ENCODE measurements at regions of chr3 and their contacts with region 1.

Region 1: GRCh38 chr3:40317061-40317855 is 7.8 kb downstream of the EIF1B start:
- DNase-seq: peak in 1 of 5 donors; percentile 56
- H3K4me3 ChIP-seq: no peak overlapping the region
- H3K27ac ChIP-seq: no peak overlapping the region
- H3K4me1 ChIP-seq: no peaks in the 10 kb centered on the region
- H3K27me3 ChIP-seq: no peaks in the 10 kb centered on the region
- CTCF ChIP-seq: peak; percentile 69 to 78 (median 71)
- EP300 ChIP-seq: no peak
- POLR2A ChIP-seq: no peak

Region 2: DNA sequence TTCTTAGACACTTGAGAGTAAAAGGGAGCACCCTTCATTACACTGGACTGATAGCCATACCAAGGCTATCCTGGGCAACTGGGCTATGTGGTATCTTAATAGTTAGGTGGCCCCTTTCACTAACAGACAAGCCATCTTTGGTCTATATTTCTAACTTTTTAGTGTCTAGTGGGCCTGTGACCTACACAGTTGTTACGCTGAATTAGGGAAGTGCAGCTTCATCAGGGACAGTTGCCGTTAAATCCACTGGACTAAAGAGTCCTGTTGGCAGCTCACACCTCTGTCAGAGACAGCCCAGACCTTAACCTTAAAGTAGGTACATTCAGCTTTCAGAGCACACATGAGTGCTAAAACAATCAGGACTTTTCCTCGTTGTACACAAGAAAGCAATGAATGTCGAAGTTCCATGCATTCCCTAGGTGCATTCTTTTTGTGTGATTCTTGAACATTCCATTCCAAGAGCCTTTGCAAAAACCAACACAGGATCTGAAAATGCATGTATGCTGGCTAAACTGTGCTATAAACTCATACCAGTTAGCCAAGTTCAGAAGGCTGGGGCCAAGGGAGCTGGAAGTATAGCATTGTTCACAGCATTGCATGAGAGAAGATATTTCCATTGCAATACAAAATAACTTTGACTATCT is 237.9 kb before region 1 on chr3:
- intact Hi-C with region 1: no loop called
- DNase-seq: no peak
- H3K4me3 ChIP-seq: no peak overlapping the region
- H3K27ac ChIP-seq: no peak overlapping the region
- H3K4me1 ChIP-seq: no peaks in the 10 kb centered on the region
- H3K27me3 ChIP-seq: no peaks in the 10 kb centered on the region
- CTCF ChIP-seq: no peak
- EP300 ChIP-seq: no peak
- POLR2A ChIP-seq: no peak

Region 3: DNA sequence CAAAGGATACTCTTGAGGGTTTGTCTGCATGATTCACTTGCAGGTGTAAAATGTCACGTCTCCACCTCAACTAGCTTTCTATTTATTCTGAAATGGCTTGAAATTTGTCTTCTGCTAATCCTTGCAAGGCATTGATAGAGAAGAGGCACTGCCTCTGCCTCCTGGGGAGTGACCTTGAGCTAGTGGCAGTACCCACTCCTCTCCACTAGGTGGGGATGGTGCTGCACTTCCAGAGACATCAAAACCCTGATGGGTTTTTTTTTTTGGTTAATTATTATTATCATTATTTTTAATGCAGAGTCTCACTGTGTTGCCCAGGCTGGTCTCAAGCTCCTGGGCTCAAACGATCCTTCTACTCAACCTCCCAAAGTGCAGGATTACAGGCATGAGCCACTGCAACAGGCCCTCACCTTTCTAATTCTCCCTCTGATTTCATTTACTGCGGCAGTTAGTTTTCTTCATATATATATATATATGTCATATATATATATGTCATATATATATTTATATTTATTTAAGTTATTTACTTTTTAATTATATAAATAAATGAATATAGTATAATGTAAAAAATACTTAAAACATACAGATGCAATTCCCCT is 125.3 kb before region 1 on chr3:
- intact Hi-C with region 1: loop called (anchors 2 to 5 kb)
- DNase-seq: peak; percentile 44 to 74 (median 68)
- H3K4me3 ChIP-seq: no peak overlapping the region
- H3K27ac ChIP-seq: no peak overlapping the region
- H3K4me1 ChIP-seq: no peaks in the 10 kb centered on the region
- H3K27me3 ChIP-seq: no peaks in the 10 kb centered on the region
- CTCF ChIP-seq: peak; percentile 56 to 78 (median 66)
- EP300 ChIP-seq: no peak
- POLR2A ChIP-seq: no peak

Region 4: GRCh38 chr3:40398346-40398745 is 81.1 kb after region 1 on chr3:
- intact Hi-C with region 1: no loop called
- DNase-seq: no peak
- H3K4me3 ChIP-seq: no peak overlapping the region
- H3K27ac ChIP-seq: no peak overlapping the region
- H3K4me1 ChIP-seq: peaks cover 1% of the 10 kb centered on the region
- H3K27me3 ChIP-seq: no peaks in the 10 kb centered on the region
- CTCF ChIP-seq: no peak
- EP300 ChIP-seq: no peak
- POLR2A ChIP-seq: no peak

Region 5: DNA sequence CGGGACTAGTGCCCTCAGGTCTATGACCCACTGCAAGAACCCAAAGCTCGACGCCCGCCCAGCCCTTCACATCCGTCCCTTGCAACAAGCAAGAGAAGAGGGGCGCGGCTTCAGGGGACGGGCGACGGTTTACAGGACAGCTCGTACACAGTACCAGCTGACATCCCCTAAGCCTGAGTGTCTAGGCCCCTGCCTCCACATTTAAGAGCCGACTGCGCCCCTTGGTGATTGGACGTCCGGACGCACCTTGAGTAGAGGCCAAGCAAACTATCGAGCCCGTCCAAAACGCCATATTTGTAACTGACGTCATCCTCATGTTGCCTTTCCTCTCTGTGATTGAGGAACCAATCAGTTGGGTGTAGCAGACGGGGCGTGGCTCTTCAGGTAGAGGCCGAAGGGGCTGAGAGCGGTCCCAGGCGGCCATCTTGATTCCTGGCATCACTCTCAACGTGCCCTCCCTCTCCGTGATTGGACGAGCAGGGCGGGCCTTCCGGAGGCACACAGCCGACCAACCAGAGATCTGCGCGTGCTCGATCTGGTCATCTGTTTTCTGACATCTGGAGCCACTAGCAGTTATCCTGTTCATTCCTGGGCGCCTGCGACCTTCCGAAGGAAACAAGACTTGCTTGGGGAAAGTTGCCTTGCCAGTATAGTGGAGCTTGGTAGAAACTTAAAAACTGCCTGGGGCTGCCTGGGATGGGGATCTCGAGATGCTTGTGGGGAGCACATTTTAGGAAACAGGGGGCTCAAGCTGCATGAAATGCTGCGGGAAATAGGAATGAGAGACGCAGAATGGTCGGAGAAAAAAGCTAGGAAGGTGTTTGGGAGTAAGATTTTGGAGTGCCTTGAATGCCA is 135.8 kb after region 1 on chr3:
- intact Hi-C with region 1: loop called in 2 of 4 experiments (anchors 10 kb)
- DNase-seq: peak; percentile 95 to 97 (median 96)
- H3K4me3 ChIP-seq: peak overlapping the region; percentile 61
- H3K27ac ChIP-seq: peak overlapping the region; percentile 82 to 88
- H3K4me1 ChIP-seq: peaks cover 9% of the 10 kb centered on the region
- H3K27me3 ChIP-seq: no peaks in the 10 kb centered on the region
- CTCF ChIP-seq: no peak
- EP300 ChIP-seq: peak; percentile 10
- POLR2A ChIP-seq: peak; percentile 36

Region 6: GRCh38 chr3:41881233-41881821 is 1564.1 kb after region 1 on chr3:
- intact Hi-C with region 1: loop called in 1 of 4 experiments (anchors 10 kb)
- DNase-seq: no peak
- H3K4me3 ChIP-seq: no peak overlapping the region
- H3K27ac ChIP-seq: no peak overlapping the region
- H3K4me1 ChIP-seq: no peaks in the 10 kb centered on the region
- H3K27me3 ChIP-seq: no peaks in the 10 kb centered on the region
- CTCF ChIP-seq: peak; percentile 47 to 73 (median 69)
- EP300 ChIP-seq: no peak
- POLR2A ChIP-seq: no peak